Gastrocnemius medialis (tissue), 4 donors: ENCODE measurements at regions of chr5 and their contacts with region 1.

Region 1: GRCh38 chr5:177497292-177498033 is at the start of gene PDLIM7:
- DNase-seq: peak; percentile 92 to 95
- ATAC-seq: peak; percentile 73 to 79
- H3K4me3 ChIP-seq: peak within 1 kb of the TSS; percentile 70 to 87 (median 82)
- H3K27ac ChIP-seq: peak within 1 kb of the TSS; percentile 96 to 99 (median 98)
- H3K4me1 ChIP-seq: peaks cover 57% of the 10 kb centered on the region in 2 donors
- H3K27me3 ChIP-seq: no peaks in the 10 kb centered on the region
- CTCF ChIP-seq: peak in 2 of 5 experiments; percentile 6 to 30
- POLR2A ChIP-seq: peak; percentile 98 to 99
- total RNA-seq, gene PDLIM7: 132 to 244 (median 220) TPM

Region 2: GRCh38 chr5:177403792-177404640 is 93.4 kb before region 1 on chr5:
- in situ Hi-C with region 1: loop called in 2 of 4 experiments (anchors 10 to 25 kb)
- intact Hi-C with region 1: loop called (anchors 1 kb)
- DNase-seq: peak; percentile 77 to 79
- ATAC-seq: peak; percentile 89 to 91
- H3K4me3 ChIP-seq: peak overlapping the region; percentile 53 to 69 (median 64)
- H3K27ac ChIP-seq: no peak overlapping the region
- H3K4me1 ChIP-seq: peaks cover 27 to 28% of the 10 kb centered on the region in 2 donors
- H3K27me3 ChIP-seq: peaks cover 49 to 57% (median 55%) of the 10 kb centered on the region in 3 donors
- CTCF ChIP-seq: peak; percentile 56 to 85 (median 78)
- POLR2A ChIP-seq: no peak

Region 3: DNA sequence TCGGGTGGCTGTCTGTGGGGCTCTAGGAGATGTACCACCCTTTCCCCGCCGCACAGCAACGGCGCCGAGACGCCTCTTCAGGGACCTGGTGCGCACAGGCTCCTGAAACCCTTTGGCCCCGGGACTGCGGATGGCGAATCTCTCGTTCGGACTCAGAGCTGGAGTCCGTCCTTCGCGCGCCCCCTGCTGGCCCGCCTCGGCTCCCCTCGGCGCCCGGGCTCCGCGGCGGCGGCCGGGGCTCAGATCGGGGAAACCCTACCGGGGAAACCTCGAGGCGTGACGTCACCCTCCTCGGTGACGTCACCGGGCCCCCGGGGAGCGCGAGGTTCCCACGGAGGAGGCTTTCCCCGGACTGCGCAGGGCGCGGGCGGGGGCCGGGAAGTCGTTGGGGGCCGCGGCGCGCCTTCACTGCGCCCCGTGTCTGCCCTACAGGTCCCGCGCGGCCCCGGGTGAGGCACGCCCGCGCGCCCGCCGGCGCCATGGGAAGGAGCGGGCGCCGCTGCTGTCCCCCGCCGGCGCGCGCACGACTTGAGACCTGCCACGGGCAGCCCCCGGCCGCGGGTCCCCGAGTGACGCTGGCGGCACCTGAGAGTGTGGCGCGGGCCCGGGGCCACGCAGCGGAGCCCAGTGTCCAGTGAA is 42.9 kb before region 1 on chr5:
- in situ Hi-C with region 1: no loop called
- intact Hi-C with region 1: loop called (anchors 1 kb)
- DNase-seq: peak; percentile 68 to 86
- ATAC-seq: peak; percentile 67 to 68
- H3K4me3 ChIP-seq: peak overlapping the region; percentile 55 to 93 (median 73)
- H3K27ac ChIP-seq: peak overlapping the region; percentile 67 to 77 (median 70)
- H3K4me1 ChIP-seq: peaks cover 9 to 25% of the 10 kb centered on the region in 2 donors
- H3K27me3 ChIP-seq: peaks cover 2 to 12% (median 9%) of the 10 kb centered on the region in 3 donors
- CTCF ChIP-seq: peak; percentile 87 to 98 (median 97)
- POLR2A ChIP-seq: peak; percentile 5 to 16

Region 4: DNA sequence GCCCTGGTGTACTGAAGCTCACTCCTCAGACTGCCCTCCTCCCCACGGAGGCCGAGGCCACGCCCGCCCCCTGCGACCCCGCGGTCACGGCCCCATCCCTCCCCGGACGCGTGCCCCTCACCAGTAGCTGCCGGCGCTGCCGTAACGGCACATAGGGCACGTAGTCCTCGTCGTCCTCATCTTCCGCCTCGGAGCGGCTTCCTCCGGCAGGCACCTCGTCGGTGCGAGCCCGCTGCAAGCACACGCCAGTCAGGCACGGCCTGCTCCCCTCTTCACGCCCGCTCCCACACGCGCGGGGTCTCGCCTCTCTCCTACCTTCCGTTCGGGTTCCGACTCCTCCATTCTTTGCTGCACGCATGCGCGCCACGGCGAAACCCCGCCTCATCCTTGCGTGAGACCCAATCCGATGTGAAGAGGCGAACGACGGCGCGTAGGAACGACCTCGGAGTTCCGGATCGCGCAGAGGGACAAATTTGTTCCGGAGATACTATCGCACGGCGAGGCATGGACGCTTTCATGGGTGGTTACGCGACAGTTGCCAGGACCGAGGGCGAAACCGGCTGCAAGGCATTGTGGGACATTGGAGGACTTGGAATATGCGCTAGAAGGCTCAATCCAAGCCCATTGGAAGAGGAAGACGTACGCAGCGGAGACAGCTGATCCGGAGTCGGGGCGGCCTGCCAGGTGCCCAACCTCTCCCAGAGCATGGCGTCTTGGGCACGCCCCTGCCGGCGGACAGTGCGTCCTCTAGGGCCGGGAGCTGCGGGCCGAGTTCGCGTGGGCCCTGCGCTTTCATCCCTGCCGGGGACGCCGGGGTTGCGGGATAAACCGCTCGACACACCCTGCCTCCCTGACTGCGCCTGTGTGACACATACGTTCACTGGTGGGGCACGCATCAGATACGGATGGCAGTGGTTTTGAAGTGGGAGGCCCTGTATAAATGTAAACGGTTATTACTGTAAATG is 19.4 kb after region 1 on chr5 and contains the start of gene DDX41:
- in situ Hi-C with region 1: no loop called
- intact Hi-C with region 1: loop called (anchors 1 kb)
- DNase-seq: peak; percentile 98 to 99
- ATAC-seq: peak; percentile 95 to 96
- H3K4me3 ChIP-seq: peak within 1 kb of the TSS; percentile 55 to 98 (median 90)
- H3K27ac ChIP-seq: peak within 1 kb of the TSS; percentile 88 to 94 (median 92)
- H3K4me1 ChIP-seq: peaks cover 15 to 28% of the 10 kb centered on the region in 2 donors
- H3K27me3 ChIP-seq: no peaks in the 10 kb centered on the region
- CTCF ChIP-seq: peak in 3 of 5 experiments; percentile 29 to 43 (median 37)
- POLR2A ChIP-seq: peak; percentile 4 to 25
- total RNA-seq, gene DDX41: 47.1 to 105 (median 62.3) TPM